Activated naive CD4-positive, alpha-beta T cell treated with anti-CD3 and anti-CD28 coated beads, Interleukin-2, amount 10 ng/mL, durations not matched to agents 7 days and 5 days (primary cell): ENCODE measurements at regions of chr3 and their contacts with region 1.

Region 1: DNA sequence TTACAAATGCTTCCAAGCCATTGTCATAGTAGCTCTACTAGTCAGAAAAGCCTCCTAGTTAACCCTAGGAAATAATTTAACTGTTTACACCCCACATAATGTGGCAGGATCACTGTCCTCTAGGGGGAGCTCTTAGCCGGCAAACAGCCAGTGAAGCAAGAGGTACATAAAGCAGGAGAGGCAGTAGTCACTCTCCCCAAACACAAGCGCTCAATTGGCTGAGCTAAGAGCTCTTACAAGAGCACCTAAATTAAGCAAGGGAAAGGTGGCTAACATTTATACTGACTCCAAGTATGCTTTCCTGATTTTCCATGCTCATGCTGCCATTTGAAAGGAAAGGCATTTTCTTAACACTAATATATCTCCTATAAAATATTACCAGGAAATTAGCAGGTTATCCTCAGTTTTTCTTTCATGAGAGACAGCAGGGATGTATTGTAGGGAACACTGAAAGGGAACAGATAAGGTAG is 37.6 kb downstream of the NCEH1 start:
- DNase-seq: peak; percentile 78
- H3K4me3 Mint-ChIP-seq: no peak overlapping the region
- H3K27ac Mint-ChIP-seq: no peak overlapping the region
- H3K4me1 Mint-ChIP-seq: peaks cover 7% of the 10 kb centered on the region
- H3K27me3 Mint-ChIP-seq: no peaks in the 10 kb centered on the region

Region 2: GRCh38 chr3:172685346-172686214 is 12.3 kb after region 1 on chr3:
- CTCF ChIA-PET with region 1: interaction called, 12 read pairs
- DNase-seq: no peak
- H3K4me3 Mint-ChIP-seq: no peak overlapping the region
- H3K27ac Mint-ChIP-seq: no peak overlapping the region
- H3K4me1 Mint-ChIP-seq: peaks cover 6% of the 10 kb centered on the region
- H3K27me3 Mint-ChIP-seq: no peaks in the 10 kb centered on the region

Region 3: GRCh38 chr3:172710664-172711453 is 37.6 kb after region 1 on chr3 and contains the start of gene NCEH1:
- CTCF ChIA-PET with region 1: interaction called, 58 read pairs
- DNase-seq: peak; percentile 86
- H3K4me3 Mint-ChIP-seq: peak within 1 kb of the TSS; percentile 90
- H3K27ac Mint-ChIP-seq: peak within 1 kb of the TSS; percentile 64
- H3K4me1 Mint-ChIP-seq: peaks cover 16% of the 10 kb centered on the region
- H3K27me3 Mint-ChIP-seq: peaks cover 22% of the 10 kb centered on the region

Region 4: GRCh38 chr3:172750368-172751174 is 77.3 kb after region 1 on chr3 and contains the start of gene ECT2:
- CTCF ChIA-PET with region 1: interaction called, 55 read pairs
- DNase-seq: peak; percentile 99
- H3K4me3 Mint-ChIP-seq: peak within 1 kb of the TSS; percentile 89
- H3K27ac Mint-ChIP-seq: peak within 1 kb of the TSS; percentile 92
- H3K4me1 Mint-ChIP-seq: peaks cover 44% of the 10 kb centered on the region
- H3K27me3 Mint-ChIP-seq: peaks cover 12% of the 10 kb centered on the region

Region 5: GRCh38 chr3:172846103-172846561 is 172.9 kb after region 1 on chr3:
- CTCF ChIA-PET with region 1: no interaction called
- DNase-seq: no peak
- H3K4me3 Mint-ChIP-seq: no peak overlapping the region
- H3K27ac Mint-ChIP-seq: no peak overlapping the region
- H3K4me1 Mint-ChIP-seq: no peaks in the 10 kb centered on the region
- H3K27me3 Mint-ChIP-seq: peaks cover 4% of the 10 kb centered on the region